Activated CD8-positive, alpha-beta T cell treated with anti-CD3 and anti-CD28 coated beads for 36 hours (primary cell): ENCODE measurements at regions of chr6 and their contacts with region 1.

Region 1: GRCh38 chr6:137589067-137589848 is 95.1 kb upstream of the OLIG3 start:
- DNase-seq: peak; percentile 71
- ATAC-seq: peak; percentile 100
- H3K4me3 Mint-ChIP-seq: no peak overlapping the region
- H3K27ac Mint-ChIP-seq: no peak overlapping the region
- H3K4me1 Mint-ChIP-seq: peaks cover 8% of the 10 kb centered on the region
- H3K27me3 Mint-ChIP-seq: no peaks in the 10 kb centered on the region
- CTCF ChIP-seq: peak; percentile 84

Region 2: GRCh38 chr6:137489046-137490005 is 99.9 kb before region 1 on chr6:
- CTCF ChIA-PET with region 1: interaction called, 10 read pairs
- POLR2A ChIA-PET with region 1: no interaction called
- intact Hi-C with region 1: no loop called
- DNase-seq: peak; percentile 3
- ATAC-seq: no peak
- H3K4me3 Mint-ChIP-seq: peak overlapping the region; percentile 24
- H3K27ac Mint-ChIP-seq: no peak overlapping the region
- H3K4me1 Mint-ChIP-seq: peaks cover 39% of the 10 kb centered on the region
- H3K27me3 Mint-ChIP-seq: peaks cover 84% of the 10 kb centered on the region
- CTCF ChIP-seq: no peak

Region 3: DNA sequence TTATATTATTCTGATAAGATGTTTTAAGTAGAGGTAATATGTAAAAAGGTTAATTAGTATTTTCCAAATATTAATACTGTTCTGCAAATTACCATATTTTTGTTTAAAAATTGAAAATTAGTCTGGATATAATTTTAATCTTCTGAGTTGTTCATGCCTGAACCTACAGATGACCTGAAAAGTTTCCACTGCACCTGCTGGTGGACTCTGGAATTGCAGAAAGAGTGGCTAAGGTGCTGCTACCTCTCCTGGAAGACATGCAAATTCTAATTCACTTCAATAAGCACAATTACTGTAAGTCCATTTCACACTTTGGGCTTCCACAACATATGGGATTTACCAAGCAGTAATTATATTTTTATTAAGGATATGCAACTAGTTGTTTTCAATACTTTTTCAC is 17.4 kb before region 1 on chr6:
- CTCF ChIA-PET with region 1: interaction called, 75 read pairs
- POLR2A ChIA-PET with region 1: no interaction called
- intact Hi-C with region 1: no loop called
- DNase-seq: peak; percentile 80
- ATAC-seq: peak; percentile 73
- H3K4me3 Mint-ChIP-seq: no peak overlapping the region
- H3K27ac Mint-ChIP-seq: no peak overlapping the region
- H3K4me1 Mint-ChIP-seq: no peaks in the 10 kb centered on the region
- H3K27me3 Mint-ChIP-seq: peaks cover 2% of the 10 kb centered on the region
- CTCF ChIP-seq: peak; percentile 83

Region 4: GRCh38 chr6:137676888-137677287 is 87.6 kb after region 1 on chr6:
- CTCF ChIA-PET with region 1: no interaction called
- POLR2A ChIA-PET with region 1: no interaction called
- intact Hi-C with region 1: no loop called
- DNase-seq: no peak
- ATAC-seq: peak; percentile 45
- H3K4me3 Mint-ChIP-seq: peak overlapping the region; percentile 24
- H3K27ac Mint-ChIP-seq: peak overlapping the region; percentile 65
- H3K4me1 Mint-ChIP-seq: peaks cover 36% of the 10 kb centered on the region
- H3K27me3 Mint-ChIP-seq: peaks cover 4% of the 10 kb centered on the region
- CTCF ChIP-seq: no peak

Region 5: DNA sequence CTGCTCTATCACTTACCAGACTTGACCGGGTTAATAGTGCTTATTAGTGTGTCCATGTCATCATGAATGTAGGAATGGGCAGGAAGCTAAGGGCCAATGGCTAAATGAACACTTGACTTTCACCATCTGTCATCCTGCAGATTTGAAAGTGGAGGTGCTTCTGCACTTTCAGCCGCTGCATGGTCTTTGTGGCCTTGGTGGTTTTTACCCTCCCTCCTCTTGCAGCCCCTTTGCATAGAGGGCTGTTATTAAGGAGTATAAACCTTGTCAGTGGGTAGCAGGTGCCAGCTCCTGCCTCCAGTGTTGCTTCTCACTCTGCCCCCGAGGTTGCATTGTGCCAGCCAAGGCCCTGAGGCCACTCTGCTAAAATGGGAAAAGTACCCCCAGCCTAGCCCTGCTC is 155.6 kb after region 1 on chr6:
- CTCF ChIA-PET with region 1: no interaction called
- POLR2A ChIA-PET with region 1: no interaction called
- intact Hi-C with region 1: no loop called
- DNase-seq: no peak
- ATAC-seq: no peak
- H3K4me3 Mint-ChIP-seq: no peak overlapping the region
- H3K27ac Mint-ChIP-seq: no peak overlapping the region
- H3K4me1 Mint-ChIP-seq: peaks cover 23% of the 10 kb centered on the region
- H3K27me3 Mint-ChIP-seq: peaks cover 2% of the 10 kb centered on the region
- CTCF ChIP-seq: no peak